Gastrocnemius medialis (tissue), 4 donors: ENCODE measurements at regions of chr9 and their contacts with region 1.

Region 1: GRCh38 chr9:11928858-11929321 is 764.3 kb upstream of the TYRP1 start:
- DNase-seq: no peak
- ATAC-seq: no peak
- H3K4me3 ChIP-seq: no peak overlapping the region
- H3K27ac ChIP-seq: no peak overlapping the region
- H3K4me1 ChIP-seq: no peaks in the 10 kb centered on the region
- H3K27me3 ChIP-seq: no peaks in the 10 kb centered on the region
- CTCF ChIP-seq: no peak
- POLR2A ChIP-seq: no peak

Region 2: DNA sequence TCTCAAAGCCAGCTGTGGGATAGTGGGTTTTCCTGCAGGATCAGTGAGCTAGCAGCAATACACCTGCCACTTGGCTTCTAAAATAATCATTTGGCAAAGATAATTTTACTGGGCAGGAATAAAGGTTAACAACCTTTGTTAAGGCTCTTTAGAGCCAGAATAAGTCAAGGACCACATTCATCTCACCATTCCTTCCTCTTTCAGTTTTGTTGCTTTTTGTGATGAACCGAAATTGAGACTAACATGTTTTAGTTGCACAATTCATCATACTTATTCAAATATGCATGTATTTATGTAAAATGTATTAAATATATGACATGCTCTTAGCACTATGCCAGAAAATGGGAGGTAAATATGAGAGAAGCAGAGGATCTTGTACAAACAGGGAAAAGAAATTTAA is 60.1 kb before region 1 on chr9:
- in situ Hi-C with region 1: loop called in 1 of 4 experiments (anchors 10 kb)
- intact Hi-C with region 1: no loop called
- DNase-seq: no peak
- ATAC-seq: no peak
- H3K4me3 ChIP-seq: no peak overlapping the region
- H3K27ac ChIP-seq: no peak overlapping the region
- H3K4me1 ChIP-seq: no peaks in the 10 kb centered on the region
- H3K27me3 ChIP-seq: no peaks in the 10 kb centered on the region
- CTCF ChIP-seq: no peak
- POLR2A ChIP-seq: no peak

Region 3: DNA sequence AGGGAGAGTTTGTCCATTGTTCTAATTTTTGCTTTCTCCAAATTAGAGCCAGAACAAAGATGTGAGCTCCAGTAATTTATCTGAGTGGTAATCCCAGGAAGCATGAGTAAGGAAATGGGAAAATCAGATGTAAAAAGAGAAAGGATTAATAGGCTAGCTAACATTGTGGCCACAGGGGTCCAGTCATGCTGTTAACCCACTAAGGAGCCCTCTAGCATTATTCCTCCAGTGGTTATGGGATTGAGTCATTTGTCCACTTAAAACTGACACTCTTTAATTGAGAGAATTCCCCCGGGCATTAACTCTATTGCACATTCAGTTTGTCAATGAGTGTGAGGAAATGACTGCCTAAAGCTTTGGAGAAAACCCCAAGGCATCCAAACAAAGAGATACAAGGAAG is 64.0 kb after region 1 on chr9:
- in situ Hi-C with region 1: no loop called
- intact Hi-C with region 1: no loop called
- DNase-seq: no peak
- ATAC-seq: no peak
- H3K4me3 ChIP-seq: no peak overlapping the region
- H3K27ac ChIP-seq: no peak overlapping the region
- H3K4me1 ChIP-seq: no peaks in the 10 kb centered on the region
- H3K27me3 ChIP-seq: no peaks in the 10 kb centered on the region
- CTCF ChIP-seq: no peak
- POLR2A ChIP-seq: no peak